ENCODE measurements at regions of chr10 and their contacts with region 1.

Region 1: GRCh38 chr10:108544494-108545120 is 1378.7 kb downstream of the XPNPEP1 start:
- DNase-seq: peak; percentile 42
- H3K4me3 Mint-ChIP-seq: no peak overlapping the region
- H3K27ac Mint-ChIP-seq: no peak overlapping the region
- H3K4me1 Mint-ChIP-seq: no peaks in the 10 kb centered on the region
- H3K27me3 Mint-ChIP-seq: no peaks in the 10 kb centered on the region

Region 2: DNA sequence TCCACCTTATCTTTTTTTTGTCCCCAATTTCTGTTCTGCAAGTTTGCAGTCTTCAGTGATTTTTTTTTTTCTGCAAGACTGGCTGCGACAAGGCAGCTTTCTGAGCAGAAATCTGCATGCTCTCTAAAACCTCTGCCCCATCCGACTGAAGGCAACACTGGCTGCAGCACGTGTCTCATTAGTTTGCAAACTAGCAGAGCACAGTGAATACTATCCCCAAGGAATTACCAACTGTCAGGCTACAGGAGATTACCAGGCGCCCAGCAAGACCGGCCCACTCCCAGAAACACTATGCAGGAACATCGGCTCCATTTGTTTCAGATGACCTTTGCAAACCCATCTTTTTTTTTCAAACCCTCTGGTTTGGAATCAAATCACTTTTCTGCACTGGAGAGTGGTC is 1918.9 kb before region 1 on chr10:
- CTCF ChIA-PET with region 1: no interaction called
- intact Hi-C with region 1: loop called (anchors 2 kb)
- DNase-seq: no peak
- H3K4me3 Mint-ChIP-seq: no peak overlapping the region
- H3K27ac Mint-ChIP-seq: no peak overlapping the region
- H3K4me1 Mint-ChIP-seq: no peaks in the 10 kb centered on the region
- H3K27me3 Mint-ChIP-seq: peaks cover 3% of the 10 kb centered on the region

Region 3: GRCh38 chr10:106705681-106706100 is 1838.9 kb before region 1 on chr10:
- CTCF ChIA-PET with region 1: no interaction called
- intact Hi-C with region 1: loop called (anchors 2 kb)
- DNase-seq: peak; percentile 64
- H3K4me3 Mint-ChIP-seq: no peak overlapping the region
- H3K27ac Mint-ChIP-seq: no peak overlapping the region
- H3K4me1 Mint-ChIP-seq: no peaks in the 10 kb centered on the region
- H3K27me3 Mint-ChIP-seq: peaks cover 1% of the 10 kb centered on the region

Region 4: DNA sequence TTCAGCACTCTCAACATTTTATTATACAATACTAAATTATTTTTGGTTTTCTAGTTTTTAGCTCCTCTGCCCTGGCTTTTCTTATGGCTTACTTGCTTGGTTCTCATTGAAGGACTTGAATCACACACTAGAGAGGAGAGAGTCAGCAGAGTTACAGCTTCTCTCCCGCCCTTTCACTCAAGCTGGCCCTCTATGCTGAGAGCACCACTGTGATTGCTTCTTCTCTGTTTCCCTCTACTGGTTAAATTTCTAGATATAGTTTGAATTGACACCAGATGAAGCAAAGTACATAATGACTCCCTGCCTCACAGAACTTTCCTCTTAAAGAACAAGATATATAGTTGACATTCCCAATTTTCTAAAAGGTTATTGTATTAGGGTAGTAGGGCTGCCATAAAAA is 612.8 kb before region 1 on chr10:
- CTCF ChIA-PET with region 1: no interaction called
- intact Hi-C with region 1: no loop called
- DNase-seq: no peak
- H3K4me3 Mint-ChIP-seq: no peak overlapping the region
- H3K27ac Mint-ChIP-seq: no peak overlapping the region
- H3K4me1 Mint-ChIP-seq: no peaks in the 10 kb centered on the region
- H3K27me3 Mint-ChIP-seq: no peaks in the 10 kb centered on the region

Region 5: DNA sequence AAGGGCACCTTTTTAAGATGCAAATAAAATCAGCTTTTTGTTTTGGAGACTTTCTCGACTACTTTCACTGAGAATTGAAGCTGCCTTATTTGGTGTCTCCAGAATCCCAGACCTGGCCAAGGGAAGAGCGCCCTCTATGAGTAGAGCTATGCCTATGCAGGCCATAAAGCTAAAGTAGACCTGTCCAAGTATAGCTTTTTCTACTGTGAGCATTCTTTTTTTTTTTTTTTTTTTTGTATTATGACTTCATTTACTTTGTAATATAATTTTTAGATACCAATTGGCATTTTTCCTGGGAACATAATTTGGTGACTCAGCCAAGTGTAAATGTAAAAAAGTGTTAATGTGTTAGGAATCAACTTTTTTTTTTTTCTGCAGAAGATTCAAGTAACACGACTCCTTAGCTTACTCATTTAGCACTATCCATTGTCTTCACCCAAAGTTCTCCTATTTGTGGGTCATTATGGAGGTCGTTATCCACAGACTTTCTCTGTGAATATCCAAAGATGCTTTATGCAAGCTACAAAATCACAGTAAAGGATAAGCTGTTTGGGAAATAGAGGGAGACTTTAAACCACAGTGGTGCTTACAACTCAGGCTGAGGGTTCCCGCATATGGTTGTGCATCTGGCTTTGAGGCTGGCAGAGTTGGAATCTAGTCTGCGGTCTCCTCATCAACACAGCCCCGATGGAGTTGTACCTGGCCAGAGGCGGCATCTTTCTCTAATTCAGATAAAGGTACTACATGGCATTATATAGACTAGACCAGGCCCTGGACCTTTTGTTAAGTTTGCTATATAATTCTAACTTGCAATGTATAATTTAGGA is 339.9 kb before region 1 on chr10:
- CTCF ChIA-PET with region 1: interaction called, 8 read pairs
- intact Hi-C with region 1: loop called (anchors 10 kb)
- DNase-seq: no peak
- H3K4me3 Mint-ChIP-seq: no peak overlapping the region
- H3K27ac Mint-ChIP-seq: no peak overlapping the region
- H3K4me1 Mint-ChIP-seq: no peaks in the 10 kb centered on the region
- H3K27me3 Mint-ChIP-seq: no peaks in the 10 kb centered on the region

Region 6: GRCh38 chr10:108567899-108568752 is 23.5 kb after region 1 on chr10:
- CTCF ChIA-PET with region 1: no interaction called
- intact Hi-C with region 1: no loop called
- DNase-seq: no peak
- H3K4me3 Mint-ChIP-seq: no peak overlapping the region
- H3K27ac Mint-ChIP-seq: no peak overlapping the region
- H3K4me1 Mint-ChIP-seq: no peaks in the 10 kb centered on the region
- H3K27me3 Mint-ChIP-seq: no peaks in the 10 kb centered on the region

Region 7: DNA sequence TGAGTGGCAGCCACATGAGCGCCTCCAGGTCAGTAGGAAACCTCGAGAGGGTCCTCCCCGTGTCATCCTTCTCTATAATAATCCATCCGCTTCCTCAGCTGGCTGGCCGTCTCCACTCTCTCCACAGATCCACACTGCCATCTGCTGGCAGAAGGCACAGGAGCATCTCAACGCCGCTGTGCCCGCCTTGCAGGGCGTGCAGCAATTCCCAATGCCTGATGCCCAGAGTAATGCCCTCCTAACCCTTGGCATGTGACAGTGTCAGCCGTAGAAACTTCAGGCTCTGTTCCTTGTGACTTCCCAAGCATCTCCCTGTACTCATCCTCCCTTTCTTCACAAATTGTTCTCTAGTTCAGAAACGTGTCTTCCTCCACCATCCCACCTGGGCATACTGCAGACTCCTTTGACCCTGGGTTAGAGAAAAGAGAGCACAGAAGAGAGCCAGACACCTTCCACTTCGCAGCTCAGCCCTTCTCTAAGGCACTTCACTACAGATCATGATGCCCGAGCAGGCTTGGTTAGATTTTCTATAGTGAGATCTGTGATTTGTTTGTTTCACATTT is 1307.9 kb after region 1 on chr10:
- CTCF ChIA-PET with region 1: interaction called, 6 read pairs
- intact Hi-C with region 1: loop called (anchors 5 kb)
- DNase-seq: peak; percentile 87
- H3K4me3 Mint-ChIP-seq: no peak overlapping the region
- H3K27ac Mint-ChIP-seq: no peak overlapping the region
- H3K4me1 Mint-ChIP-seq: peaks cover 14% of the 10 kb centered on the region
- H3K27me3 Mint-ChIP-seq: no peaks in the 10 kb centered on the region

Measured in activated naive CD4-positive, alpha-beta T cell treated with anti-CD3 and anti-CD28 coated beads for 36 hours (primary cell).